Breast epithelium (tissue), 4 donors: ENCODE measurements at regions of chr1 and their contacts with region 1.

Region 1: DNA sequence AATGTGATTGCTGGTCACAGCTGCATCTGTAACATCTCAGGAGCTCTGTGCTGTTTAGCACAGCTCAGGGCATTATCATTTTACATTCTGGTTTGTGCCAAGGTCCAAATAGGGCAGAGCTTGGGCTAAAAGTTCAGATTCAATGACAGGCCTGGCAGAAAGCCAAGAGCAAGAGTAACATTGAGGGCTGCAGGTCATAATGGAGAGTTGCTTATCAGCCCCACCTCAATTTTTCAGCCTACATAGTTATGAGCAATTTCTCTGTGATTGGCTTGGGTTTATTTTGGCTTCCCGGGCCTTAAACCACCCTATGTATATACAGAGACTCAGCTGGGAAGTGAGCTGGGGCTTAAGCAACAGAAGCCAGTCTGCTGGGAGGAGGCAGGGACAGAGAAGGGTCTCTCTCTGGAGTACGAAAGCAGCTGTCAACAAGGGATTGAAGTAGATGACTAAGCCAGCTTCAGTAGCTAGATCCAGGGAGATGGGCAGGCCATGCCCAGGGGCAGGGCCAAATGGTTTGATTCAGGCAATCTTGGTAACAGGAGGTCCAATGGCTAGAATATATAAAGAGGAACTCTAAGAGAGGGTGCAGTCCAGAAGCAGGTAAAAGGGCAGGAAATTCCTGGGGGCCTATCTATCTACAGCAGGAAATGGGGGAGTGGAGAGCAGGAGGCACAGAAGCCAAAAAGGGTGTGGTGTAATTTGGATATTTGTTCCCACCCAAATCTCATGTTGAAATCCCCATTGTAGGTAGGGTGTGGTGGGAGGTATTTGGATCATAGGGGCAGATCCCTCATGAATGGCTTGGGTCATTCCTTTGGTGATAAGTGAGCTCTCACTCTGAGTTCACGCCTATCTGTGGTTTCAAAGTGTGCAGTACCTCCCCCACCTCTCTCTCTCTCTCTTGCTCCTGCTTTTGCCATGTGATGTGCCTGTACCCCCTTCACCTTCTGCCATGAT is 49.1 kb downstream of the BRINP2 start:
- DNase-seq: no peak
- H3K4me3 ChIP-seq: no peak overlapping the region
- H3K27ac ChIP-seq: no peak overlapping the region
- H3K4me1 ChIP-seq: no peaks in the 10 kb centered on the region
- H3K27me3 ChIP-seq: no peaks in the 10 kb centered on the region
- CTCF ChIP-seq: no peak
- POLR2A ChIP-seq: no peak

Region 2: GRCh38 chr1:177377866-177378265 is 158.0 kb after region 1 on chr1:
- intact Hi-C with region 1: loop called (anchors 5 kb)
- DNase-seq: no peak
- H3K4me3 ChIP-seq: no peak overlapping the region
- H3K27ac ChIP-seq: no peak overlapping the region
- H3K4me1 ChIP-seq: no peaks in the 10 kb centered on the region
- H3K27me3 ChIP-seq: no peaks in the 10 kb centered on the region
- CTCF ChIP-seq: no peak
- POLR2A ChIP-seq: no peak